Activated CD4-positive, alpha-beta memory T cell treated with anti-CD3 and anti-CD28 coated beads for 36 hours (primary cell): ENCODE measurements at regions of chr13 and their contacts with region 1.

Region 1: GRCh38 chr13:99442273-99442895 is 58.9 kb upstream of the TM9SF2 start:
- DNase-seq: peak; percentile 58
- H3K4me3 Mint-ChIP-seq: no peak overlapping the region
- H3K27ac Mint-ChIP-seq: no peak overlapping the region
- H3K4me1 Mint-ChIP-seq: peaks cover 13% of the 10 kb centered on the region
- H3K27me3 Mint-ChIP-seq: peaks cover 8% of the 10 kb centered on the region

Region 2: GRCh38 chr13:99208845-99209527 is 233.4 kb before region 1 on chr13:
- CTCF ChIA-PET with region 1: no interaction called
- POLR2A ChIA-PET with region 1: no interaction called
- intact Hi-C with region 1: no loop called
- DNase-seq: no peak
- H3K4me3 Mint-ChIP-seq: no peak overlapping the region
- H3K27ac Mint-ChIP-seq: peak overlapping the region; percentile 15
- H3K4me1 Mint-ChIP-seq: peaks cover 78% of the 10 kb centered on the region
- H3K27me3 Mint-ChIP-seq: no peaks in the 10 kb centered on the region

Region 3: GRCh38 chr13:99606324-99607066 is 164.1 kb after region 1 on chr13:
- CTCF ChIA-PET with region 1: no interaction called
- POLR2A ChIA-PET with region 1: interaction called, 3 read pairs
- intact Hi-C with region 1: loop called (anchors 2 kb)
- DNase-seq: peak; percentile 93
- H3K4me3 Mint-ChIP-seq: peak within 1 kb of the TSS; percentile 85
- H3K27ac Mint-ChIP-seq: peak within 1 kb of the TSS; percentile 72
- H3K4me1 Mint-ChIP-seq: peaks cover 33% of the 10 kb centered on the region
- H3K27me3 Mint-ChIP-seq: no peaks in the 10 kb centered on the region

Region 4: DNA sequence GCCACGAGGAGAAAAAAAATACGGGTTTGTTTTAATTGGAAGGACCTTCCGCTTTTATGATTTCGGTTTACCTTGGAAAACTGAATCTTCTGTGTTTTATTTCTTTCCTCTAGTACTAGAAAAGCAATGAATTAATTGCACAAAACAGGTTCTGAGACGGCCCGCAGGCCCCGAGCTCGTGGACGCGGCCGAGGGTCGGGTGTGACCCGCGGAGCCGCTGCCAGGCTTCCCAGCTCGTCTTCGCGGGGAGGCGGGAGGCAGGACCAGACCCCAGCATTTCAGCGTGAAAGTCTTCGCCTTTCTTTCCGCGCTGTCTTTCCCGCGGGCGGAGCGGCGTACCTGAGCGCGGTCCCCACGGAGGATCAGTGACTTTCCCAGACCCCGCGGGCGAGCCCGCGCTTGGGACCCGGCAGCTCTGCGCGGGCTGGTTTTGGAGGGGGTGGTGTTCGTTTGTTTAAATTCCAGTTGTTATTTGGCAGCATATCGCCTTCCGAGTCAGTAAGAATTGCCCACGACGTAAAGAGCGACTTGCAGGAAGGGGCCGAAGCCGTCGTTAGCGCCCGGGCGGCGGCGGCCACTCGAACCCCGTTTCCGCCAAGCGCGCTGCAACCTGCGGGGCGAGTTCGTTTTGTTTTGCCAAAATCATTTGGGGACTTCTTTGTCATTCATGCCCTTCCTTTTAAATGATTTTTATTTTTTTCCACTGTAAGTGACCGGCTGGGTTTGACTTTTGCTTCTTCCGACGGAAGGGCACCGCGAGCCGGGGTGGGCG is 453.0 kb after region 1 on chr13:
- CTCF ChIA-PET with region 1: no interaction called
- POLR2A ChIA-PET with region 1: no interaction called
- intact Hi-C with region 1: loop called (anchors 10 kb)
- DNase-seq: no peak
- H3K4me3 Mint-ChIP-seq: peak overlapping the region; percentile 59
- H3K27ac Mint-ChIP-seq: no peak overlapping the region
- H3K4me1 Mint-ChIP-seq: peaks cover 9% of the 10 kb centered on the region
- H3K27me3 Mint-ChIP-seq: peaks cover 39% of the 10 kb centered on the region